Activated CD4-positive, alpha-beta T cell treated with anti-CD3 and anti-CD28 coated beads, Interleukin-2, amount 10 ng/mL, durations not matched to agents 7 days and 5 days (primary cell): ENCODE measurements at regions of chr16 and their contacts with region 1.

Region 1: DNA sequence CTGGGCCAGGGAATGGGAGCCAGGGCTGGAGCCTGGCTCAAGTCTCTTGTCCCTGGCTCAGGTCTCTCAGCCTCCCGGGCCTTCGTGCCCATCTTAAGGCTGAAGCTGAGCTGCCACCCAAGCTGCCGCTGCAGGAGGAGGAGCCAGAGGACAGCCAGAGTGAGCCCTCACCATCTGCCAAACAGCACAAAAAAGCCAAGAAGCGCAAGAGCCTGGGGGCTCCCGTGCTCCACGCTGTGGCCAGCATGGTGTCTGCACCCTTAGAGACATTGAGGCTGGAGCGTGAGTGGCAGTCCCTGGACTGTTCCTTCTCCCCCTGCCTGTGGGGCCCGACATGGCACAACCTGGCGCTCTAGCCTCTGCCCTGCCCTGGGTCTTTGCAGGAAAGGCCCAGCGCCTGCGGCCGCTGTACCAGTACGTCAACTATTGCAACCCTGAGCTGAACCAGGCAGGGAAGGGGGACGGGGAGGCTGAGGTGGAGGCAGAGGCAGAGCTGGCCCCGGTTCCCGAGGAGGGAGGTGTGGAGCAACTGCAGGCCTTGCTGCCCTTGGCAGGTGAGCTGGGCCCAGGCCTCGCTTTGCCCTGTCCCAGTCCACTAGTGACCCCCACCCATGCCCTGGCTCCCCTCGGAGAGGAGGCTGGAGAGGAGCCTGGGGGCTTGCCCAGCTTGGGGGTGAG is 1.3 kb downstream of the C16orf86 start:
- DNase-seq: peak; percentile 89
- H3K4me3 Mint-ChIP-seq: peak overlapping the region; percentile 84
- H3K27ac Mint-ChIP-seq: peak overlapping the region; percentile 41
- H3K4me1 Mint-ChIP-seq: peaks cover 37% of the 10 kb centered on the region
- H3K27me3 Mint-ChIP-seq: no peaks in the 10 kb centered on the region

Region 2: GRCh38 chr16:67537270-67537635 is 130.7 kb before region 1 on chr16:
- CTCF ChIA-PET with region 1: interaction called, 18 read pairs
- POLR2A ChIA-PET with region 1: no interaction called
- DNase-seq: peak; percentile 49
- H3K4me3 Mint-ChIP-seq: peak overlapping the region; percentile 71
- H3K27ac Mint-ChIP-seq: peak overlapping the region; percentile 75
- H3K4me1 Mint-ChIP-seq: peaks cover 26% of the 10 kb centered on the region
- H3K27me3 Mint-ChIP-seq: peaks cover 32% of the 10 kb centered on the region

Region 3: GRCh38 chr16:67561824-67562525 is 106.0 kb before region 1 on chr16:
- CTCF ChIA-PET with region 1: interaction called, 19 read pairs
- POLR2A ChIA-PET with region 1: interaction called, 3 read pairs
- DNase-seq: peak; percentile 99
- H3K4me3 Mint-ChIP-seq: peak overlapping the region; percentile 87
- H3K27ac Mint-ChIP-seq: peak overlapping the region; percentile 97
- H3K4me1 Mint-ChIP-seq: peaks cover 47% of the 10 kb centered on the region
- H3K27me3 Mint-ChIP-seq: no peaks in the 10 kb centered on the region

Region 4: DNA sequence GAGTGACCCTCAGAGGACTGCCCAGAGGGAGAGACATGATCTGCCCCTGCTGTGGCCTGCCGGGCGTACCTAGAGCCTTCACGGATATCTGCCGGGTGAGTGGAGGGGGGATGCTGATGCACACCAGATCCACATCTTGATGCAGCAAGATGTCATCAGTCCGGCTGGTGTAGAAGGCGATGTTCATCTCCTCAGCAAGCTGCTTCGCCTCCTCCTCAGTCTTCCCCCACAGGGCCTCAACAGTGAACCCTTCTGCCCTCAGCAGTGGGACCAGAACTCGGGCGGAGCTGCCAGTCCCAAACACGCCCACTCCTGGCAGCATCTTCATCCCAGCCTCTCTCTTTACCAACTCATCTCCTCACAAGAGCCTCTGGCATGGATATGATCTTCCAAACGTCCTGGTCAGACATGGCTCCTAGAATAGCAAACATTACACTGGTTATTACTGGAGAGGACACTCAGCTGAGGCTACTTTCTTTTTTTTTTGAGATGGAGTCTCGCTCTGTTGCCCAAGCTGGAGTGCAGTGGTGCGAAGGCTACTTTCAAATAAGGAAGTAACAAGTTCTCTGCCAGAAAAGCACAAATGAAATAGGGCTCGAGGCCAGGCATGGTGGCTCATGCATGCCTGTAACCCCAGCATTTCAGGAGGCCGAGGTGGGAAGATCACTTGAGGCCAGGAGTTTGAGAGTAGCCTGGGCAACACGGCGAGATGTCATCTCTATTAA is 17.6 kb after region 1 on chr16:
- CTCF ChIA-PET with region 1: interaction called, 11 read pairs
- POLR2A ChIA-PET with region 1: interaction called, 3 read pairs
- DNase-seq: no peak
- H3K4me3 Mint-ChIP-seq: no peak overlapping the region
- H3K27ac Mint-ChIP-seq: peak overlapping the region; percentile 87
- H3K4me1 Mint-ChIP-seq: peaks cover 14% of the 10 kb centered on the region
- H3K27me3 Mint-ChIP-seq: no peaks in the 10 kb centered on the region

Region 5: DNA sequence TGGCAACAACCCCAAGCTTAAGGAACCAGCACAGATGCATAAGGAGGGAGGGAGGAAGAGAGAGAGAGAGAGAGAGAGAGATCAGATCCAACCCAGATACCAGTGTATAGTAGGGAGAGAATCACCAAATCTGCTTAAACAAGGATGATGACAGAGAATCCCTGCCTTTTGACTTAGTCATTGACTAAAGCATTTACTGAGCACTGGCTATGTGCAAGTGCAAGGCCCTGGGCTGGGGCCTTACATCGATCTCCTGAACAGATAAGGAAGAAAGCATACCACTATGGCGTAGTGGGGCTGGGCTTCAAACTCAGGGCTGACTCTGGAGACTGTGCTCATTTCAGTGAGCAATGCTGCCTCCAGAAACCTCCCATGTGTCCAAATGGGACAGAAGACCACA is 154.6 kb after region 1 on chr16:
- CTCF ChIA-PET with region 1: no interaction called
- POLR2A ChIA-PET with region 1: no interaction called
- DNase-seq: no peak
- H3K4me3 Mint-ChIP-seq: no peak overlapping the region
- H3K27ac Mint-ChIP-seq: no peak overlapping the region
- H3K4me1 Mint-ChIP-seq: no peaks in the 10 kb centered on the region
- H3K27me3 Mint-ChIP-seq: no peaks in the 10 kb centered on the region